ENCODE measurements at regions of chr2 and their contacts with region 1.

Region 1: GRCh38 chr2:207149249-207150213 is 16.2 kb downstream of the KLF7 start:
- DNase-seq: no peak
- H3K4me3 Mint-ChIP-seq: no peak overlapping the region
- H3K27ac Mint-ChIP-seq: peak overlapping the region; percentile 89
- H3K4me1 Mint-ChIP-seq: peaks cover 64% of the 10 kb centered on the region
- H3K27me3 Mint-ChIP-seq: no peaks in the 10 kb centered on the region
- CTCF ChIP-seq: no peak

Region 2: GRCh38 chr2:207133820-207134519 is 15.6 kb before region 1 on chr2:
- CTCF ChIA-PET with region 1: interaction called, 4 read pairs
- POLR2A ChIA-PET with region 1: interaction called, 10 read pairs
- intact Hi-C with region 1: no loop called
- DNase-seq: peak; percentile 81
- H3K4me3 Mint-ChIP-seq: peak overlapping the region; percentile 59
- H3K27ac Mint-ChIP-seq: peak overlapping the region; percentile 78
- H3K4me1 Mint-ChIP-seq: peaks cover 57% of the 10 kb centered on the region
- H3K27me3 Mint-ChIP-seq: no peaks in the 10 kb centered on the region
- CTCF ChIP-seq: no peak

Region 3: DNA sequence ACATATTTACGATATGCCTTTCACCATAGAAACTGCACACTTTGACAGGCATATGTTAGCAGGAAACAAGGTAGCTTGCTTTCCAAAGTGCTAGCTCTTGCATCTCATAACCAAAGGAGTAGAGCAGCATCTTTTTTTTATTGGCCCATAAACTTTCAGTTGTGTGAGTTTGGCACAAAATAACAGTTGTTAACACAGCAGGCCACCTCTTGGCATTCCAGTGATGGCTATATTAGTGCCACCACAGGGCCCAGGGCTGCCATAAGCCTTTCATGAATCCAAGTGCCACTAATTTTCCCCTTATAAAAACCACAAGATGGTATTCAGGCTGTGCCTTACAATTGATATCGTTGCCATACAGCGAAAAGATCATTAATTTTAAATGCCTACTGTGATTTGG is 56.5 kb after region 1 on chr2:
- CTCF ChIA-PET with region 1: no interaction called
- POLR2A ChIA-PET with region 1: no interaction called
- intact Hi-C with region 1: no loop called
- DNase-seq: no peak
- H3K4me3 Mint-ChIP-seq: no peak overlapping the region
- H3K27ac Mint-ChIP-seq: no peak overlapping the region
- H3K4me1 Mint-ChIP-seq: no peaks in the 10 kb centered on the region
- H3K27me3 Mint-ChIP-seq: no peaks in the 10 kb centered on the region
- CTCF ChIP-seq: no peak